Activated B cell treated with CpG ODN at 0.5 μM for 24 hours (primary cell): ENCODE measurements at regions of chrX and their contacts with region 1.

Region 1: DNA sequence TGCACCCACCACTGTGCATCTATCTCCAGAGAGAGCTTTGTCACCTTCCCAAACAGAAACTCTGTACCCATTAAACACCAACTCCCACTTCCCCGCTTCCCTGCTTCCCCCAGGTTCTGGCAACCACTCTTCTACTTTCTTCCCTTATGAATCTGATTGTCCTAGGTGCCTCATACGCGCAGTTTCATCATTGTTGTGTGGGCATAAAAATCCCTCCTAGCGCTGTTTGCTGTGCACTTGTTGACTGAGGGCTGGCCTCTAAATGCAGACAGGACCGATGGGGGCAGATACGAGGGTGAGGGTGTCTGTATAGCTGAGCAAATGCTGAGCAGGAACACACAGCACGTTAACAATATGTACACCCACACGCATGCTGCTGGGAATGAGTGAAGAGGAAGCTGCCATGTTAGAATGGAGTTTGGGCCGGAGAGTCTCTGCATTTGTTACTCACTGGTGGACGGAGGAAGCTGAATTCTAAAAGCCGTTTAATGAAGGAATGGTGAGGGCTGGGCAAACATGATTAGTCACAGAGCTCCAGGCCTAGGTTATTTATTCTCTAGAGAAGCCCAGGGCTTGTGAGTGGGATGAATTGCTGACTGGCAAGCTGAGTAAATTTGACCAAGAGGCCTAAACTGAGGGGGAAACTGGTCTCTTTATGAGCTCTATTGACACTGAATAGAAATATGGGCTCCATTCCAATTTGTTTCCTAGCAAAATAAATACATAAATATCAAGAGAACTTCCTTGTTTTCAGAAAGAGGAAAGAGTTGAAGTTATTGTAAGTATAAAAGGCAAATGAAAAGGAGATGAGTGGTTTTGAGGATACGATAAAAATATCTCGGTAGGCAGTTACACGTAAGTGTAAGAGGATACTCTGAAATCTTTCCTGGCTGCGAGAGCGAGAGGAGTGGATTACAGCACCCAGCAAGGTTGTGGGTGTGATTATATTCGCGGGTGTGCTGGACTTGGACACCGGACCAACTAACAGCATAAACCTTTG is 95.9 kb upstream of the RPS6KA3 start:
- DNase-seq: no peak
- ATAC-seq: no peak
- H3K4me3 Mint-ChIP-seq: no peak overlapping the region
- H3K27ac Mint-ChIP-seq: no peak overlapping the region
- H3K4me1 Mint-ChIP-seq: no peaks in the 10 kb centered on the region
- H3K27me3 Mint-ChIP-seq: no peaks in the 10 kb centered on the region
- CTCF ChIP-seq: no peak

Region 2: DNA sequence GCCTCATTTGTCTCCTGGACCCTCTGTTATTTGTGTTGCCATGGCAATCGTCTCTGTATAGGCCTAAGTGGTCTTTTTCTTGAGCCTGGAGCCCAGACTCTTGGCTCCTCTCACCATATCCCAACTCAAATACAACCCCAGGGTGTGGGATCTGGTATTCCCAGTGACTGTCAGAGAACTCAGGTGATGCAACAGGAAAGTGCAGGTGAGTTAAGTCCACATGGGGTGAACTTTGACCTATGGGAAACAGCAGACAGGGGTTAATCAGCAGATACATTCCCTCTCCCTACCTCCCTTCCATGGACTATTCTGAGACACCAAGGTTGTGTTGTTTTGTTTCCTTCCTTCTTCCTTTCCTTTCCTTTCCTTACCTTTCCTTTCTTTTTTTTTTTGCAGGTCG is 35.0 kb after region 1 on chrX:
- CTCF ChIA-PET with region 1: no interaction called
- POLR2A ChIA-PET with region 1: no interaction called
- intact Hi-C with region 1: loop called (anchors 5 kb)
- DNase-seq: no peak
- ATAC-seq: no peak
- H3K4me3 Mint-ChIP-seq: no peak overlapping the region
- H3K27ac Mint-ChIP-seq: no peak overlapping the region
- H3K4me1 Mint-ChIP-seq: peaks cover 13% of the 10 kb centered on the region
- H3K27me3 Mint-ChIP-seq: no peaks in the 10 kb centered on the region
- CTCF ChIP-seq: no peak